ENCODE measurements at regions of chr7 and their contacts with region 1.

Region 1: GRCh38 chr7:132871419-132871818 is 210.5 kb downstream of the CHCHD3 start:
- DNase-seq: no peak
- ATAC-seq: peak; percentile 47
- H3K4me3 ChIP-seq: no peak overlapping the region
- H3K27ac ChIP-seq: peak overlapping the region; percentile 5; the same call in 1 of the 2 replicates
- H3K4me1 ChIP-seq: peaks cover 17% of the 10 kb centered on the region; the same call in 1 of the 2 replicates
- H3K27me3 ChIP-seq: no peaks in the 10 kb centered on the region
- CTCF ChIP-seq: no peak
- EP300 ChIP-seq: no peak
- POLR2A ChIP-seq: no peak
- RAD21 ChIP-seq: no peak

Region 2: GRCh38 chr7:132858251-132858650 is 13.2 kb before region 1 on chr7:
- CTCF ChIA-PET with region 1: interaction called, 4 read pairs
- POLR2A ChIA-PET with region 1: interaction called, 6 read pairs
- RAD21 ChIA-PET with region 1: no interaction called
- SMC1A ChIA-PET with region 1: interaction called, 13 read pairs
- in situ Hi-C with region 1: no loop called
- intact Hi-C with region 1: no loop called
- DNase-seq: no peak
- ATAC-seq: peak; percentile 76
- H3K4me3 ChIP-seq: no peak overlapping the region
- H3K27ac ChIP-seq: no peak overlapping the region
- H3K4me1 ChIP-seq: no peaks in the 10 kb centered on the region
- H3K27me3 ChIP-seq: no peaks in the 10 kb centered on the region
- CTCF ChIP-seq: no peak
- EP300 ChIP-seq: 0 out of 4 replicates have a peak, but pooled peaks of 1 of the 2 experiments have one; percentile 17
- POLR2A ChIP-seq: no peak
- RAD21 ChIP-seq: no peak

Region 3: GRCh38 chr7:132882714-132883428 is 11.5 kb after region 1 on chr7:
- CTCF ChIA-PET with region 1: interaction called, 3 read pairs
- POLR2A ChIA-PET with region 1: interaction called, 3 read pairs
- RAD21 ChIA-PET with region 1: interaction called, 14 read pairs
- SMC1A ChIA-PET with region 1: interaction called, 53 read pairs
- in situ Hi-C with region 1: no loop called
- intact Hi-C with region 1: no loop called
- DNase-seq: peak; percentile 47
- ATAC-seq: peak; percentile 92
- H3K4me3 ChIP-seq: no peak overlapping the region
- H3K27ac ChIP-seq: peak overlapping the region; percentile 57; the same call in 1 of the 2 replicates
- H3K4me1 ChIP-seq: peaks cover 14% of the 10 kb centered on the region
- H3K27me3 ChIP-seq: no peaks in the 10 kb centered on the region
- CTCF ChIP-seq: no peak
- EP300 ChIP-seq: no peak
- POLR2A ChIP-seq: no peak
- RAD21 ChIP-seq: no peak